ENCODE measurements at regions of chr9 and their contacts with region 1.

Region 1: DNA sequence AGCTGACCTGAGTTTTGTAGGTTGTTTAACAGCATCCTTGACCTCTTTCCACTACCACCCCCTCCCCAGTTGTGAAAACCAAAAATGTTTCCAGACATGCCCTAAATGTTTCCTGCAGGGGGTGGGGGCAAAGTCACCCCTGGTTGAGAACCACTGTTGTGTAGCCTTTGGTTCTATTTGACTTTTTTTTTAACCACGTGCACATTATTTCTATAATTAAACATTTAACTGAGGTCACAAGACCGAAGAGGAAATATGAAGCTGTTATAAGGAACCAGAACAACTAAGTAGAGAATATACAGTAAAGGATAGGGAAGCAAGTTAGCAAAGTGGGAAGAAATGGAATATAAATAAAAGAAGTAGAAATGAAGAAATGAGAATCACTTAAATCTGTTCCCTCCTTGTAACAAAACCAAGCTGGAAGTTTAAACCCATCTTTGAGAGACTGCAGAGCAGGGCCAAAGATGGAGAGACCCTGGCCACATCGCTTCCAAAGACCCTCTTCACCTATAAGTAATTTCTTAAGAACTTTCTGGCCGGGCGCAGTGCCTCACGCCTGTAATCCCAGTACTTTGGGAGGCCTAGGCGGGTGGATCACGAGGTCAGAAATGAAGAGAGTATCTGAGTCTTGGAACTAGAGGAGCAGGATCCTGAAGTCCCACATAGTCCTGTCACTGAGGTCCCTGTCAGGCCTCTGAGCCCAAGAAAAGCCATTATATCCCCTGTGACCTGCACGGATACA is 14.4 kb downstream of the SIT1 start:
- DNase-seq: peak in 1 of 2 donors; percentile 34
- H3K4me3 ChIP-seq: no peak overlapping the region
- H3K27ac ChIP-seq: no peak overlapping the region
- H3K4me1 ChIP-seq: no peaks in the 10 kb centered on the region
- H3K27me3 ChIP-seq: no peaks in the 10 kb centered on the region
- CTCF ChIP-seq: no peak

Region 2: GRCh38 chr9:35604578-35605350 is 31.5 kb before region 1 on chr9 and contains the start of gene TESK1:
- intact Hi-C with region 1: loop called (anchors 5 kb)
- DNase-seq: peak; percentile 59 to 88
- H3K4me3 ChIP-seq: peak within 1 kb of the TSS; percentile 84 to 94
- H3K27ac ChIP-seq: peak within 1 kb of the TSS; percentile 91 to 94
- H3K4me1 ChIP-seq: peaks cover 5 to 28% (median 26%) of the 10 kb centered on the region in 4 donors
- H3K27me3 ChIP-seq: no peaks in the 10 kb centered on the region
- CTCF ChIP-seq: no peak

Region 3: DNA sequence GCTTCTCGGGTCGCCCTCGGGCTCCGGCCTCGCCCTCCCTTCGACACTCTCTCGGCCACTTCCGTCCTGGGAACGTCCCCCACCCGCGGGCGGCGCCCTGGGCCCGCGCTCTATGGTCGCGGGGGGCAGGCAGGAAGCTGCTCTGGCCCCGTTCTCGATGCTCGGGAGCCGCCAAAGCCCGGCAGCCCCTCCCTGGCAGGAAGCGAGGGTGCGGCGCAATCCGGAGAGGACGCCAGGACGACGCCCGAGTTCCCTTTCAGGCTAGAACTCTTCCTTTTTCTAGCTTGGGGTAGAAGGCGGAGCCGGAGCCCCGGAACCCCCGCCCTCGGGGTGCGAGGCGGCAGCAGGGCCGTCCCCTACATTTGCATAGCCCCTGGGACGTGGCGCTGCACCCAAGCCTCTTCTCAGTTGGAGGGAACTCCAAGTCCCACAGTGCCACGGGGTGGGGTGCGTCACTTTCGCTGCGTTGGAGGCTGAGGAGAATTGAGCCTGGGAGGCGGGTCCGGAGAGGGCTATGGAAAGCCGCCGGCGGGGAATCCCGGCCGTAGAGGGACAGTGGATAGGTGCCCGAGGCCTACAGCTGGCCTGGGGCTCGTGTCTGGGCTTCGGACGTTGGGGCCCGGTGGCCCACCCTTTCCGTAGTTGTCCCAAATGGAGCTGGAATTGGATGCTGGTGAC is 96.0 kb after region 1 on chr9 and contains the starts of genes CREB3 and TLN1:
- intact Hi-C with region 1: no loop called
- DNase-seq: peak; percentile 99 to 100
- H3K4me3 ChIP-seq: peak within 1 kb of the TSS; percentile 65 to 93
- H3K27ac ChIP-seq: peak within 1 kb of the TSS; percentile 92 to 99
- H3K4me1 ChIP-seq: peaks cover 0 to 68% (median 50%) of the 10 kb centered on the region in 4 donors
- H3K27me3 ChIP-seq: no peaks in the 10 kb centered on the region
- CTCF ChIP-seq: no peak

Region 4: GRCh38 chr9:35859990-35860339 is 223.7 kb after region 1 on chr9:
- intact Hi-C with region 1: loop called (anchors 10 kb)
- DNase-seq: no peak
- H3K4me3 ChIP-seq: no peak overlapping the region
- H3K27ac ChIP-seq: no peak overlapping the region
- H3K4me1 ChIP-seq: no peaks in the 10 kb centered on the region
- H3K27me3 ChIP-seq: peaks cover 0 to 8% of the 10 kb centered on the region in 2 donors
- CTCF ChIP-seq: no peak

Measured in tibial artery (tissue), 4 donors.